Caco-2 (cell line): ENCODE measurements at regions of chr12 and their contacts with region 1.

Region 1: DNA sequence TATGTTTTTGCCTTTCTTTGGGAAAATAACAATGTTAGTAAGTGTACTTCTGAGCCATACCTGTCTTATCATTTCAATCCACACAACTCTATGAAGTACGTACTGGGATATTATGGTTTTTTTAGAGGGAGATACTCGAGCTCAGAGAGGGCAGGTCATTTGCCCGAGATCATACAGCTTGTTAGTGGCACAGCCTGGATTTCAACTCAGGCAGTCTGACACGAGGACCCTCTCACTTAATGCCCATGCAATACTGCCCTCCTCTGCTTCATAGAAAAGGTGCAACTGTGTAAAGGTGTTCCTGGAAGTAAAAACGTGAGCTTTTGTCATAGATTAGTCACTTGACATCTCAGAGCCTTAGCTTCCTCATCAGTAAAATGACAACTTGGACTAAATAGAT is 128.0 kb downstream of the NDUFA12 start:
- DNase-seq: peak in 1 of 2 experiments; percentile 53
- H3K4me3 ChIP-seq: no peak overlapping the region
- H3K4me3 Mint-ChIP-seq: no peak overlapping the region
- H3K27ac Mint-ChIP-seq: no peak overlapping the region
- H3K4me1 ChIP-seq: peaks cover 5% of the 10 kb centered on the region; the same call in 1 of the 2 replicates
- H3K4me1 Mint-ChIP-seq: peaks cover 7% of the 10 kb centered on the region
- H3K27me3 ChIP-seq: peaks cover 3% of the 10 kb centered on the region
- H3K27me3 Mint-ChIP-seq: peaks cover 27% of the 10 kb centered on the region
- CTCF ChIP-seq: peak; percentile 34 to 35

Region 2: GRCh38 chr12:94545935-94546771 is 329.4 kb before region 1 on chr12:
- CTCF ChIA-PET with region 1: no interaction called
- POLR2A ChIA-PET with region 1: no interaction called
- intact Hi-C with region 1: loop called (anchors 2 kb)
- DNase-seq: peak; percentile 40 to 66
- H3K4me3 ChIP-seq: no peak overlapping the region
- H3K4me3 Mint-ChIP-seq: no peak overlapping the region
- H3K27ac Mint-ChIP-seq: no peak overlapping the region
- H3K4me1 ChIP-seq: no peaks in the 10 kb centered on the region
- H3K4me1 Mint-ChIP-seq: no peaks in the 10 kb centered on the region
- H3K27me3 ChIP-seq: no peaks in the 10 kb centered on the region
- H3K27me3 Mint-ChIP-seq: no peaks in the 10 kb centered on the region
- CTCF ChIP-seq: peak; percentile 46 to 75

Region 3: DNA sequence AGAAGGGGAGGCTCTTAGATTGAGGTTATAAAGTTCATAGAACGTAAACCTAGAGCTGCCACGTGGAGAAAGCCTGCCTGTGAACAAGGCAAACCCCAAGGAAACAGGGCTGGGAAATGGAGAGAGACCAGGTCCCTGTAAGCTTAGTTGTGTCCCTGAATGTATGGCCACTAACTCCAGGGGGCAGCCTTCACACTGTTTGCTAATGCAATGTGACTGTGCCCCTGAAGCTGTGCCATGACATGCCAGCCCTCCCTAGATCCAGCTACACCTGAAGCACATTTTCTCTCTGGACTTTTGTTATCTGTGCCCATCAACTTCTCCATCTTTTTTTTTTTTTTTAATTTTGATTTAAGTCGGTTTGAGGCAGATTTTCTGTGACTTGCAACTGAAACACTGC is 164.6 kb before region 1 on chr12:
- CTCF ChIA-PET with region 1: interaction called, 7 read pairs
- POLR2A ChIA-PET with region 1: no interaction called
- intact Hi-C with region 1: loop called (anchors 10 kb)
- DNase-seq: peak in 1 of 2 experiments; percentile 31
- H3K4me3 ChIP-seq: no peak overlapping the region
- H3K4me3 Mint-ChIP-seq: no peak overlapping the region
- H3K27ac Mint-ChIP-seq: no peak overlapping the region
- H3K4me1 ChIP-seq: no peaks in the 10 kb centered on the region
- H3K4me1 Mint-ChIP-seq: no peaks in the 10 kb centered on the region
- H3K27me3 ChIP-seq: no peaks in the 10 kb centered on the region
- H3K27me3 Mint-ChIP-seq: peaks cover 3% of the 10 kb centered on the region
- CTCF ChIP-seq: peak; percentile 36 to 42

Region 4: GRCh38 chr12:94783862-94784261 is 91.7 kb before region 1 on chr12:
- CTCF ChIA-PET with region 1: interaction called, 3 read pairs
- POLR2A ChIA-PET with region 1: no interaction called
- intact Hi-C with region 1: loop called (anchors 10 kb)
- DNase-seq: no peak
- H3K4me3 ChIP-seq: no peak overlapping the region
- H3K4me3 Mint-ChIP-seq: no peak overlapping the region
- H3K27ac Mint-ChIP-seq: no peak overlapping the region
- H3K4me1 ChIP-seq: peaks cover 10% of the 10 kb centered on the region; the same call in 1 of the 2 replicates
- H3K4me1 Mint-ChIP-seq: peaks cover 19% of the 10 kb centered on the region
- H3K27me3 ChIP-seq: no peaks in the 10 kb centered on the region
- H3K27me3 Mint-ChIP-seq: no peaks in the 10 kb centered on the region
- CTCF ChIP-seq: no peak